AG04450 (cell line): ENCODE measurements at regions of chr6 and their contacts with region 1.

Region 1: GRCh38 chr6:107114213-107114905 is 956 bp downstream of the BEND3 start:
- DNase-seq: peak; percentile 53
- H3K4me3 ChIP-seq: peak overlapping the region; percentile 62
- H3K27ac ChIP-seq: no peak overlapping the region
- H3K27me3 ChIP-seq: peaks cover 6% of the 10 kb centered on the region
- CTCF ChIP-seq: peak; percentile 55

Region 2: DNA sequence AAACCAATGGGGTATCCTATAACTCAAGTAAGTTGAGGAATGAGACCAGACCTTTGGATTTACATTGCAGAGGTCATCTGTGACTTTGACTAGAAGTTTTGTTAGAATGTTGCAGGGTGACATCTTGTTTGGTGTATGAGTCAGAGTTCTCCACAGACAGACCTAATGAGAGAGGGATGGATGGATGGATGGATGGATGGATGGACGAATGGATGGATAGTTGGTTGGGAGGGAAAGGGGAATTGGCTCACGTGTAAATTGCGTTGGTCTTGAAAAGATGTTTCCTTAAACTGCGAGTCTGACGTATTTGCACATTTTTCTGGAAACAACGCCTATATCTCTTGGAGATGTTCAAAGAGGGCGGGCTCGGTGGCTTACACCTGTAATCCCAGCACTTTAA is 87.4 kb before region 1 on chr6:
- CTCF ChIA-PET with region 1: interaction called, 11 read pairs
- POLR2A ChIA-PET with region 1: interaction called, 3 read pairs
- DNase-seq: no peak
- H3K4me3 ChIP-seq: no peak overlapping the region
- H3K27ac ChIP-seq: no peak overlapping the region
- H3K27me3 ChIP-seq: no peaks in the 10 kb centered on the region
- CTCF ChIP-seq: no peak

Region 3: DNA sequence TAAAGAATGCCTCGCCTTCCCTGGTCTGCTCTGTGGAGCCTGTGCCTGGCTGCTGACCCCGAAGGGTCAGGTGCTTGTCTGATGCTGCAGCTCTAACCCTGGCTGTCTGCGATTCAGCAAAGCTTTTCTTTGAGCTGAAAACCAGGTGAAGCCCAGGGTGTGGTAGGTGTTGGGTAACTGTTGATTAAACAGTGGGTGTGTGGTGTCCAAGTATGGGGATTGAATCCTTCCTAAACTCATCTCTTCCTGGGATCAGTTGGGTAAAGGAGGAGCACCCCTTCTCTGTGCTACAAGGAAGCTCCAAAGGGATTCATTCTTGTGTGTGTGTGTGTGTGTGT is 67.8 kb before region 1 on chr6:
- CTCF ChIA-PET with region 1: no interaction called
- POLR2A ChIA-PET with region 1: no interaction called
- DNase-seq: no peak
- H3K4me3 ChIP-seq: no peak overlapping the region
- H3K27ac ChIP-seq: no peak overlapping the region
- H3K27me3 ChIP-seq: no peaks in the 10 kb centered on the region
- CTCF ChIP-seq: no peak

Region 4: GRCh38 chr6:107061125-107062020 is 53.0 kb before region 1 on chr6:
- CTCF ChIA-PET with region 1: no interaction called
- POLR2A ChIA-PET with region 1: no interaction called
- DNase-seq: no peak
- H3K4me3 ChIP-seq: no peak overlapping the region
- H3K27ac ChIP-seq: no peak overlapping the region
- H3K27me3 ChIP-seq: no peaks in the 10 kb centered on the region
- CTCF ChIP-seq: no peak

Region 5: DNA sequence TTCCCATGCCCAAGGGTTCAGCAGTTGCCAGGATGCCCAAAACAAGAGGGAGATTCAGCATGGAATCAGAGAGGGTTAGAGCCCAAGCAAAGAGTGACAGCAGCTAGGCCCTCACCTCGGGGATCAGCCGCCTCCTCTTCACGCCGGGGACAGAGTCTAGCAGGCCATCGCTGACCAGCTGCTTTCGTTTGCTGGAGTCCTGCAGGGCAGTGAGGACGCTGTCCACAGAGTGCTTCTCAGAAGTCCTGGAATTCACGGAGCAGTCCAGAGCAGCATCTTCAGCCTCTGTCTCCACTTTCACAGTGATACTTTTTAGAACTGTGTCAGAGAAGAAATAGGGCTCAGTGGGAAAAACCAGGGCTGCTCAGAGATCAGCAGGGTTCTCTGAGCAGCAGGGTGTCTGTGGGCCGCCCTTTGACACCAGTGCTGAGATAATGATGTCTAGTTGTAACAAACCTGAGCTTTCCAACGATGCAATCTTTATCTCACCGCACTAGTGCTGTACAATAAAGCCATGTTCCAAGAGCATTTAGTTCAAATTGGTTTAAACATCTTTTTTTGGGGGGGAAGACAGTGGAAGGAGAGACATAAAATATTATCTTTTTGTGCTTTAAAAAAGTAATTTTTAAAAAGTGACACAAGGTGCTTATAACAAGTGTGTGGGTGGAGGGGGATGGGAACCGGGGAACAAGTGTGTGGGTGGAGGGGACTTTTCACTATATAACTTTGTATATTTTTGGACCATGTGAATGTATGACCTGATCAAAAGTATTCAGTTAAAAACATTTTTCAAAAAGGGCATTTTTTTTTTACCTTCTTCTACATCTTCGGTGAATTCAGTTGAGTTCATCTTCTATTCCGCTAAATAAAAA is 15.7 kb before region 1 on chr6:
- CTCF ChIA-PET with region 1: interaction called, 23 read pairs
- POLR2A ChIA-PET with region 1: no interaction called
- DNase-seq: no peak
- H3K4me3 ChIP-seq: no peak overlapping the region
- H3K27ac ChIP-seq: no peak overlapping the region
- H3K27me3 ChIP-seq: no peaks in the 10 kb centered on the region
- CTCF ChIP-seq: no peak

Region 6: GRCh38 chr6:107369493-107369892 is 255.1 kb after region 1 on chr6:
- CTCF ChIA-PET with region 1: no interaction called
- POLR2A ChIA-PET with region 1: no interaction called
- DNase-seq: no peak
- H3K4me3 ChIP-seq: no peak overlapping the region
- H3K27ac ChIP-seq: no peak overlapping the region
- H3K27me3 ChIP-seq: no peaks in the 10 kb centered on the region
- CTCF ChIP-seq: no peak